ENCODE measurements at regions of chr4 and their contacts with region 1.

Region 1: GRCh38 chr4:104860238-104861123 is 286.2 kb upstream of the TET2 start:
- DNase-seq: peak; percentile 66
- H3K4me3 Mint-ChIP-seq: no peak overlapping the region
- H3K27ac Mint-ChIP-seq: no peak overlapping the region
- H3K4me1 Mint-ChIP-seq: no peaks in the 10 kb centered on the region
- H3K27me3 Mint-ChIP-seq: no peaks in the 10 kb centered on the region

Region 2: DNA sequence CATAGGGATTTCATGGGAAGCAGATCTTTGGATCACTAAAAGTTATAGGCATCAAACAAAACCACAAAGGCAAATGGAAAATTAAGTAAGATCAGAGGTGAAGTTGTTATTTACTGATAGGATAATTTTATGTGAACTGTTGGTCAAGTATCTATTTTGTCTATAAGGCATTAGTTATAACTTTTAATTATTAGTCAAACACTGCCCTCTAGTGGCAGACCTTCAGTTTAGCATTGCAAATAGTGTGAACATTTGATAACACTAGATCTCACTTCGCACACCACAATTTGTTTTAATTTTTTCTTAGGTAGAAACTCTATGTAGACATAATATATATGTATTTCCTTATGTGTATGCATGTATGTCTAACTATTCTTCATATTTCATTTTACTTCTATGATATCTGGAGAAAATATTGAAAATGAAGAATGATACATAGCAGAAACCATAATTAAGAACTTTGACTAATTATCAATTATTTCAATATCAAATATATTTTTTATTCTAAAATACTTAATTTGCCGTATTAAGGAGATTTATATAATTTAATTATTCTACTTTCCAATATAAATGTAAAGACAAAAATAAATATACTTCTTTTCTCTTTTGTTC is 926.2 kb before region 1 on chr4:
- CTCF ChIA-PET with region 1: no interaction called
- intact Hi-C with region 1: loop called (anchors 10 kb)
- DNase-seq: peak; percentile 30
- H3K4me3 Mint-ChIP-seq: no peak overlapping the region
- H3K27ac Mint-ChIP-seq: no peak overlapping the region
- H3K4me1 Mint-ChIP-seq: no peaks in the 10 kb centered on the region
- H3K27me3 Mint-ChIP-seq: no peaks in the 10 kb centered on the region

Region 3: DNA sequence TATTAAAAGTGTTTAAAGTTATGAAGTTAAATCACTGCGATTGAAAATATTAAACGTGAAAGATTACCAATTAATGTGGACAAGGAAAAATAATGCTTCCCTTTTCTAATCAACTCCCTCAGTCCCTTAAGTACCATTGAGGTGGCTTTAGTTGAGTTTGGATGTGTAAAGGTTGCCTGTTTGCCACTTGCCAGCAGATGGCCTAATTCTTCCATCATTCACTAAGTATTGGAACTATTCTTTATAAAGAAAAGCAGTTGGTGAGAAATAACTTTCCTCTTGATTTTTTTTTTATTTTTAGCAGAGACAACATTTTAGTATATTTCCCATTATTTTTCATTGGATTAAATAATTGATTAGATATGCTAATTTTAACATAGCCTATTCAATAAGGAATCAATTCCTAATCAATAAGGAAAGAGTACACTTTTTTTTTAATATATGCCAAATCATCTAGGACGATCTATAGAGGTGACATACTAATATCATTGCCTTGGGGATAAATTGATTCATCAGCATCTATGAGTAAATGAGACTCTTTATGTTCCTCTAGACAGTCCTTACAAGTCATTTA is 844.7 kb before region 1 on chr4:
- CTCF ChIA-PET with region 1: no interaction called
- intact Hi-C with region 1: loop called (anchors 5 kb)
- DNase-seq: peak; percentile 5
- H3K4me3 Mint-ChIP-seq: no peak overlapping the region
- H3K27ac Mint-ChIP-seq: no peak overlapping the region
- H3K4me1 Mint-ChIP-seq: no peaks in the 10 kb centered on the region
- H3K27me3 Mint-ChIP-seq: no peaks in the 10 kb centered on the region

Region 4: DNA sequence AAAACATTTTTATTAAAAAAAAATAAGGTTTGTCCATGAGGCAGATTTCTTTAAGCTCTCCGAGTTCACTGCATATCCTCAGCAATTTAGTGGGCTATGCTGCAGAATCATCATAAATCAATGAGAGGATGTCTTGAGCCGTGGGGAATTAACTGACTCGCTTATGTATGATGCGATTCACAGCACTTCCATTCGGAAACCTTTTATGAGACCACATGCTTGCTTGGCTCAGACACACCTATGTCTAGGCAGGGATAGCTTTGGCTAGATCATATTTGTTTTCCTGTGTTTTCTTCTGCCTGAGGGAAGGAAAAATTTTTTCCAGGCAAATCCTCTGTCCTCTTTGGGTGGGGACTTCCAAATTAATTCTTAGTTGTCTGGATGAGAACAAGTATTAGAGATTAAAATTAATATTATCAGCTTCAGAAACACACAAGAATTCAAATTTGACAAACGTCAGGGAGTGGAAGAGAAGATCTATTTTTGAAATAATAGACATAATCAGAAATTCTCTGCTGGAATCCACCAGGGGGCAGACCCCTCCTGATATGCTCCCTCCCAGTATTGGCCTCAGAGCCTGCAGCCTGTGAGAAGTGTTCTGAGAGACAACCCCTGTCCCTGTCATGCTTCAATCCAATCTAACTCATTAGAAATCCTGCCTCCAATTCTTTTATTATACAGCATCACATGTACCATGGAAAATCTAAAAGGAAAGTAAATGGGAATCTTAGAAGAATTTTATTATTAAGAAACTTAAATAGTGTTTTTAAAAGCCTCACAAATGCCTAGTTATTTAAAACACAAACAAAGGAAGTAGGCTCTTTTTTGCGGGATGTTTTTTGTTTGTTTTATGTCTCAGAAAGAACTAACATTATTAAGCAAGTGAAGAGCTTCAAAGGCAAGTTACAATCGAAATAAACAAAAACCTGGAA is 795.6 kb before region 1 on chr4:
- CTCF ChIA-PET with region 1: no interaction called
- intact Hi-C with region 1: loop called (anchors 1 kb)
- DNase-seq: peak; percentile 35
- H3K4me3 Mint-ChIP-seq: no peak overlapping the region
- H3K27ac Mint-ChIP-seq: no peak overlapping the region
- H3K4me1 Mint-ChIP-seq: no peaks in the 10 kb centered on the region
- H3K27me3 Mint-ChIP-seq: no peaks in the 10 kb centered on the region

Region 5: GRCh38 chr4:104693599-104694201 is 166.8 kb before region 1 on chr4:
- CTCF ChIA-PET with region 1: no interaction called
- intact Hi-C with region 1: loop called (anchors 5 kb)
- DNase-seq: no peak
- H3K4me3 Mint-ChIP-seq: no peak overlapping the region
- H3K27ac Mint-ChIP-seq: no peak overlapping the region
- H3K4me1 Mint-ChIP-seq: no peaks in the 10 kb centered on the region
- H3K27me3 Mint-ChIP-seq: no peaks in the 10 kb centered on the region

Measured in activated naive CD4-positive, alpha-beta T cell treated with anti-CD3 and anti-CD28 coated beads for 36 hours (primary cell).